ENCODE measurements at regions of chr3 and their contacts with region 1.

Region 1: DNA sequence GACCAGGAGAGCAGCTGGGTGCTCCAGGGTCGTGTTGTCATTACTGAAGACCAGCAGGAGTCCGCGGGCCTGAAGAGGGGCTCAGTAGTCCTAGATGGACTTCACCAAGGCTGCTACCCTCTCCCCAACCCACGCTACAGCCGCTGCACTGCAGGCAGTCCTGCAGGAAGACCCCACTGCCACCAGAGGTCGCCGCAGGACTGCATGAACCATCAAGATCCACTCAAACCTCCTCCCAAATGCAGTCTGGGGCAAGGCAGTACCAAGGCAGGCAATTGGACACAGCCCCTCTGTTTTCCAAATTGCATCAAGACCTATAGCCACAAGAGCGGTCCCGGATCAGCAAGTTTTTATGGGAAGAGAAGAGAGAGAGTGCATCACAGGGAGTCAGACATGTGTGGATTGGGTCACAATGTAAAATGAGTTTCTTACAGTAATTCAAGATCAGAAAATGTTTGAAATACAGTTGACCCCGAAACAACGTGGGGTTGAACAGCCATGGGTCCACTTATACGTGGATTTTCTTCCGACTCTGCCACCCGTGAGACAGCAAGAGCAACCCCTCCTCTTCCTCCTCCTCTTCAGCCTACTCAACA is 46.7 kb downstream of the DZIP1L start:
- DNase-seq: no peak
- H3K4me3 ChIP-seq: no peak overlapping the region
- H3K27me3 ChIP-seq: no peaks in the 10 kb centered on the region
- CTCF ChIP-seq: peak; percentile 98

Region 2: GRCh38 chr3:137906985-137907640 is 161.6 kb before region 1 on chr3:
- CTCF ChIA-PET with region 1: no interaction called
- POLR2A ChIA-PET with region 1: no interaction called
- DNase-seq: no peak
- H3K4me3 ChIP-seq: no peak overlapping the region
- H3K27me3 ChIP-seq: no peaks in the 10 kb centered on the region
- CTCF ChIP-seq: no peak

Region 3: DNA sequence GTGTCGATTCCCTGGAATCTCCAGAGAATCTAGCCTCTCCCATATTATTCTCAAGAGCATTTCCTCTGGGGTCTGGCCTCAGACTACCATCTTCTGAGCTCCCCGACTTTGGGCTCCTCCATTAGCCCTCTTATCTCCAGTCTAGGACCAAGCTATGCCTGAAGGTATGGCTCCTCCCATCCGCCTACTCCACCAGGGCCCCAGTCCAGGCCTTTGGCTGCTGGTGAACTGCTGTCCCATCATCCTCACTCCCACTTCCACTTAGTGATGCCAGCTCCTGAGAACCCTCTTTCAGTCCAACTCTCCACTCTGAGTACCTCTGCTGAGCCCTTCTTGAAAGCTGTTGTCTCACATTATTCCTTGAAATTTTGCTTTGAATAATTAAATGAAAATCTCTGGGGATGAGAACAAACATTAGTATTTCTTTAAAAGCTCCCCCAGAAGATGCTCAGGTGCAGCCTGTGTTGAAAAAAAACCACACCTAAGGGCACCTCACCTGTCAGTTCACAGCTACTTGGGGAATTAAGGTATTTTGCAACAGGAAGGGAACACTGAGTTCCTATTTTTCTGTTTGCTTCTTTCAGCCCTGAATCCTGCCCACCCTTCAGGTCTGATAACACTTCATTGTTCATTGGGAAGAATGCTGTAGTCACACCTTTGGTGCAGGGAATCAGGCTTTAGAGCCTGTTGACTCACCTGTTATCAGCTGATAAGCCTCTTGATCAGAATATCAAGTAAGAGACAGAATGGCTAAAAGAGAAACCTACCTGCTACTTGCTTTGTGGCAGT is 49.2 kb before region 1 on chr3:
- CTCF ChIA-PET with region 1: no interaction called
- POLR2A ChIA-PET with region 1: no interaction called
- DNase-seq: no peak
- H3K4me3 ChIP-seq: no peak overlapping the region
- H3K27me3 ChIP-seq: no peaks in the 10 kb centered on the region
- CTCF ChIP-seq: no peak

Region 4: DNA sequence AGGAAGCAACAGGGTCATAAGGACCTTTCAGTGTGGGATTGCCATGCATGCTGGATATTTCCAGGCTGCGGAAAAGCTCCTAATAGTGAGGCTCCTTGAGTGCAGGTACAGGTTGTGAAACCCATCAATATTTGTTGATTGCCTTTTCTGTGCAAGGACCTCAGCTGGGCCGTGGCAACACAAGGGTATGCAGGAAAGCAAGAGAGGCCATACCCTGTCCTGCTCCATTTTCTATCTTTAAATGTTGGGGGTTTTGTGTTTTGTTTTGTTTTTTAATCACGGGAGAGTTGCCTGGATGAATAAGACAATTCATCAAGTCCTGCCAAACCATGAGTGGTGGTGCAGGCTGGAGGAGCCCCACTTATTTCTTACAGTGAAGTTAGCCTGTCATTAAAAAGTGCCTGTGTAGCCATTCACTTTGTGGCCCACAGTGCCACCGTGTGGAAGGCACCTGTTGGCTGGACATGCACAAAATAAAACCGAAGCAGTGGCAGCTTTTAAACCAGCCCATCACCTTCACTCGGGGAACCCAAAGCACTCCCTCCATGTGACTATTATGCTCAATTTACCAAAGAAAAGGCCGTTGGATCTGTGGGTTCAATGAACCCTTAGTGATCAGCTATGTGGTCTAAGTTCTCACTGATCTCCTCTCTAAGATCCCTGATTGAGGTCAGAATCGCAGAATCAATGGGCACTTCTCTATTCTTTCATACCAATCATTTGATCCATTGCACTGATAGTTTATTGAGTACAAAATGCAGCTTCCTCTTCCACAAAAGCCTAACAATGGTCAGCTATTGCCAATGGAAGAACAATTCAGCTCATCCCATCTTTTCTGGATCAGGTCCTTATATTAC is 16.5 kb before region 1 on chr3:
- CTCF ChIA-PET with region 1: interaction called, 38 read pairs
- POLR2A ChIA-PET with region 1: no interaction called
- DNase-seq: no peak
- H3K4me3 ChIP-seq: no peak overlapping the region
- H3K27me3 ChIP-seq: no peaks in the 10 kb centered on the region
- CTCF ChIP-seq: peak; percentile 72